Panc1 (cell line): ENCODE measurements at regions of chr1 and their contacts with region 1.

Region 1: DNA sequence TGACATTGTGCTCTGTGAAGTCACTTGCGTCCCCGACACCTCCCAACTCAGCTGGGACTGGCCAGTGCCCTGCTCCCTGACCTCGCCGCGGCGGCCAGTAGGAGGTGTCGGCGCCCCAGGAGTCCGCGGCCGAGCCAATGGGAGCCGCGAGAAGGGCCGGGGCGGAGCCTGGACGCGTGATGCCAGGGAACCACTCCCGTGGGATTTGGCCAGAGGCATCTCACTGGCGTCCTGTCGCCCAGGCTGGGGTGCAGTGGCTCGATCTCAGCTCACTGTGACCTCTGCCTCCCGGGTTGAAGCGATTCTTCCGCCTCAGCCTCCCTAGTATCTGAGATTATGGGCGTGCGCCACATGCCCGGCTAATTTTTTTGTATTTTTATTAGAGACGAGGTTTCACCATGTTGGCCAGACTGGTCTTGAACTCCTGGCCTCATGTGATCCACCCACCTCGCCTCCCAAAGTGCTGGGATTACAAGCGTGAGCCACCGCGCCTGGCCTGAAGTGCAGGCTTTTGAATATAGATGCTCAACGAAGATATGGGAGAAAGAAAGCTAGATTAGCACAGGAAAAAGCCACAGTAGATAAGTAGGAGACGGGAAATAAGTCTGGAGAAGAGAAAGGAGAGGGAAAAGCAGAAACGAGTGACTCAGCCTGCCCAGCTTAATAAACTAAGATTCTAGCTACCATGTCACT is 38.0 kb downstream of the ZBTB8OS start:
- DNase-seq: peak; percentile 69
- ATAC-seq: peak; percentile 100
- H3K4me3 ChIP-seq: peak overlapping the region; percentile 54 to 85
- H3K27ac ChIP-seq: peak overlapping the region; percentile 76
- H3K4me1 ChIP-seq: peaks cover 5% of the 10 kb centered on the region; the same call in 1 of the 2 replicates
- H3K27me3 ChIP-seq: no peaks in the 10 kb centered on the region
- CTCF ChIP-seq: no peak

Region 2: GRCh38 chr1:32266921-32267591 is 345.3 kb before region 1 on chr1:
- CTCF ChIA-PET with region 1: no interaction called
- POLR2A ChIA-PET with region 1: no interaction called
- in situ Hi-C with region 1: no loop called
- intact Hi-C with region 1: no loop called
- DNase-seq: no peak
- ATAC-seq: no peak
- H3K4me3 ChIP-seq: no peak overlapping the region
- H3K27ac ChIP-seq: no peak overlapping the region
- H3K4me1 ChIP-seq: peaks cover 6% of the 10 kb centered on the region; the same call in 1 of the 2 replicates
- H3K27me3 ChIP-seq: no peaks in the 10 kb centered on the region
- CTCF ChIP-seq: no peak

Region 3: GRCh38 chr1:32372149-32372756 is 240.1 kb before region 1 on chr1:
- CTCF ChIA-PET with region 1: no interaction called
- POLR2A ChIA-PET with region 1: interaction called, 11 read pairs
- in situ Hi-C with region 1: no loop called
- intact Hi-C with region 1: no loop called
- DNase-seq: no peak
- ATAC-seq: peak; percentile 58
- H3K4me3 ChIP-seq: no peak overlapping the region
- H3K27ac ChIP-seq: no peak overlapping the region
- H3K4me1 ChIP-seq: no peaks in the 10 kb centered on the region
- H3K27me3 ChIP-seq: no peaks in the 10 kb centered on the region
- CTCF ChIP-seq: no peak